Heart left ventricle (tissue), 16 donors: ENCODE measurements at regions of chr16 and their contacts with region 1.

Region 1: GRCh38 chr16:48535831-48536613 is 74.0 kb downstream of the N4BP1 start:
- DNase-seq: peak; percentile 67 to 89 (median 72)
- ATAC-seq: peak; percentile 30 to 49 (median 40)
- H3K4me3 ChIP-seq: peak overlapping the region in 2 of 12 donors; percentile 1
- H3K27ac ChIP-seq: peak overlapping the region; percentile 38 to 89 (median 66)
- H3K4me1 ChIP-seq: peaks cover 14 to 57% (median 37%) of the 10 kb centered on the region in 12 donors
- H3K27me3 ChIP-seq: no peaks in the 10 kb centered on the region
- CTCF ChIP-seq: no peak
- POLR2A ChIP-seq: no peak

Region 2: GRCh38 chr16:48353565-48354163 is 182.4 kb before region 1 on chr16:
- intact Hi-C with region 1: loop called in 7 of 10 experiments (anchors 5 to 10 kb)
- DNase-seq: peak in 3 of 5 donors; percentile 49 to 62 (median 53)
- ATAC-seq: peak; percentile 66 to 86 (median 83)
- H3K4me3 ChIP-seq: no peak overlapping the region
- H3K27ac ChIP-seq: peak overlapping the region in 2 of 12 donors; percentile 34 to 42
- H3K4me1 ChIP-seq: peaks cover 0 to 26% (median 8%) of the 10 kb centered on the region in 12 donors
- H3K27me3 ChIP-seq: no peaks in the 10 kb centered on the region
- CTCF ChIP-seq: peak; percentile 78 to 91 (median 83)
- POLR2A ChIP-seq: no peak

Region 3: DNA sequence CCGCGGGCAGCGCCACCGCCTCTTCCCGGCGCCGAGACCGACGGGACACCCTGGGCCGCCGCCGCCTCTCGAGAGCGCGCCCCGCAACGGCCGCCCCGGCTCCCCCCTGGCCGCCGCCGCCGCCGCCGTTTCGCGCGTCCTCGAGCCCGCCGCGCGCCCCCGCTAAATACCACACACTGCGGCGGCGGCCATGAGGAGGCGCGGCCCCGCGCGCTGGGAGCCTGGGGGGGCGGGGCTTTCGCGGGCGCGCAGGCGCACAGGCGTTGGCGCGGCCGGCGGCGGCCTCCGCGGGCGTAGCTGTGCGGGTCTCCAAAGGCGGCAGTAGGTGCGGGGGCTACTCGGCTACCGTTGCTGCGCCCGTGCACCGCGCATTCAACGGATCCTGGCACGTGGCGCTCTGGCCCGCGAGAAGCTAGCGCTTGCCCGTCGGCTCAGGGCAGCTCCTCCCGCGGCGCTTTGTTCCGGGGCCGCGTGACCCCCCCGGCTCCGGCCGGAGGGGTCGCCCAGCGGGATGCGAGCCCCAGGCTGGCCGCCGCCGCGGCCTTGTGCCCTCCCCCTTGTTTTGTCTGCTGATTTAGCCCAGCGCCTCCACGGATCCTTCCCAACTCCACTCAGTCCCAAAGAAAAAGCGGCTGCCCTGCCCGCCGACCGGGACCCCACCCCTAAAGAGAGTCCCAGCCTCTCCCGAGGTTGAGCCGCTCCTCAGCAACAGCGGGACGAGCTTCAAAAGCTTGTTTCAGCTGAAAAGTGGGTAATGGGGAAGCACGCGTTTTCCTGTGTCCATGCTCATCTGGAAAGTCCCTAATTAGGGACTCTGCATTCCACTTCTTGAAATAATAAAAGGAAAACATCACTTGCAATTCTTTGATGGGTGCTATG is 150.5 kb before region 1 on chr16 and contains the start of gene SIAH1:
- intact Hi-C with region 1: loop called in 4 of 10 experiments (anchors 10 kb)
- DNase-seq: peak; percentile 86 to 93 (median 89)
- ATAC-seq: peak; percentile 79 to 95 (median 93)
- H3K4me3 ChIP-seq: peak within 1 kb of the TSS; percentile 85 to 99 (median 95)
- H3K27ac ChIP-seq: peak within 1 kb of the TSS; percentile 97 to 100 (median 99)
- H3K4me1 ChIP-seq: peaks cover 6 to 50% (median 24%) of the 10 kb centered on the region in 12 donors
- H3K27me3 ChIP-seq: no peaks in the 10 kb centered on the region
- CTCF ChIP-seq: no peak
- POLR2A ChIP-seq: peak; percentile 55 to 87
- total RNA-seq, gene SIAH1: 10.9 to 21.5 (median 15.5) TPM

Region 4: DNA sequence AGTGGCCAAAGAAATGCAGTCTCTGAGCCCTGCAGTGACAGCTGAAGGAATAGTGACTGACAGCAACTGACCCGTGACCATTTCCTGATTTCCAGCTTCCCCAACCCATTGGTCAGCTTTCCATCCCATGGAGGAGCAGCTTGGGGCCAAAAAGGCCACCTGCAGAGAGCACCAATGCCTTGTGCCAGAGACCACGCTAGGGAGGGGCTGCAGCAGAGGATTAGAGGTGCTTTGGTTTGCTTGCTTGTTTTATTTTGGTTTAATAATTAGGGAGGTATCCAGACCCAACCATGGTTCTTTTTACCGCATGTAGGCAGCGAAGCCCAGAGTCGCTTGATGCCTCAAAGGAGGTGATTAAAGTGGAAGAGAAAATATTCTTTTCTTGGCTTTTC is 89.5 kb before region 1 on chr16:
- intact Hi-C with region 1: loop called in 1 of 10 experiments (anchors 5 kb)
- DNase-seq: no peak
- ATAC-seq: no peak
- H3K4me3 ChIP-seq: no peak overlapping the region
- H3K27ac ChIP-seq: no peak overlapping the region
- H3K4me1 ChIP-seq: peaks cover 0 to 20% (median 13%) of the 10 kb centered on the region in 12 donors
- H3K27me3 ChIP-seq: no peaks in the 10 kb centered on the region
- CTCF ChIP-seq: no peak
- POLR2A ChIP-seq: no peak

Region 5: DNA sequence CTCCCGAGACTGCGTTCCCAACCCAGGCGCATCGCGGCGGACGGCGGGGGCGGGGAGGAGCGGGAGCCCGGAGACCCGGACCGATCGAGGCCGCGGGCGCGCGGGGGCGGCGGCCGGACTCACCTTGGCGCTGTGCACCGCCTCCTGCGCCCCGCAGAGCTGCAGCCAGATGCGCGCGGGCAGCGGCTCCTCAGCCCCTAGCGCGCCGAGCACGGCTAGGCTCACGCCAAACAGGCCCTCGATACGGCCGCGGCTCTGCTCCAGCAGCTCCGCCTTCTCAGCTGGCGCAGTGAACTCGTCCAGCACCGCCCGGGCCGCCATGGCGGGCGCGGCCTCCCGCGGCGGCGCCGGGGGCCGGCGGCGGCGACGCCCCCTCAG is 73.6 kb after region 1 on chr16:
- intact Hi-C with region 1: loop called in 1 of 10 experiments (anchors 5 kb)
- DNase-seq: peak; percentile 66 to 87 (median 74)
- ATAC-seq: peak in 3 of 4 donors; percentile 46 to 77 (median 76)
- H3K4me3 ChIP-seq: peak overlapping the region; percentile 72 to 99 (median 90)
- H3K27ac ChIP-seq: peak overlapping the region; percentile 62 to 97 (median 90)
- H3K4me1 ChIP-seq: peaks cover 3 to 81% (median 45%) of the 10 kb centered on the region in 12 donors
- H3K27me3 ChIP-seq: no peaks in the 10 kb centered on the region
- CTCF ChIP-seq: no peak
- POLR2A ChIP-seq: no peak